ENCODE measurements at regions of chr5 and their contacts with region 1.

Region 1: GRCh38 chr5:110159202-110159601 is 469.5 kb downstream of the MAN2A1 start:
- DNase-seq: peak; percentile 89
- ATAC-seq: peak; percentile 41
- H3K4me3 ChIP-seq: no peak overlapping the region
- H3K27ac ChIP-seq: no peak overlapping the region
- H3K4me1 ChIP-seq: peaks cover 25% of the 10 kb centered on the region
- H3K27me3 ChIP-seq: no peaks in the 10 kb centered on the region
- CTCF ChIP-seq: no peak

Region 2: GRCh38 chr5:109996246-109996645 is 163.0 kb before region 1 on chr5:
- CTCF ChIA-PET with region 1: no interaction called
- POLR2A ChIA-PET with region 1: no interaction called
- intact Hi-C with region 1: loop called (anchors 2 kb)
- DNase-seq: peak; percentile 51
- ATAC-seq: peak; percentile 48
- H3K4me3 ChIP-seq: no peak overlapping the region
- H3K27ac ChIP-seq: no peak overlapping the region
- H3K4me1 ChIP-seq: peaks cover 34% of the 10 kb centered on the region
- H3K27me3 ChIP-seq: no peaks in the 10 kb centered on the region
- CTCF ChIP-seq: no peak

Measured in PC-3 (cell line).